ENCODE measurements at regions of chr4 and their contacts with region 1.

Region 1: DNA sequence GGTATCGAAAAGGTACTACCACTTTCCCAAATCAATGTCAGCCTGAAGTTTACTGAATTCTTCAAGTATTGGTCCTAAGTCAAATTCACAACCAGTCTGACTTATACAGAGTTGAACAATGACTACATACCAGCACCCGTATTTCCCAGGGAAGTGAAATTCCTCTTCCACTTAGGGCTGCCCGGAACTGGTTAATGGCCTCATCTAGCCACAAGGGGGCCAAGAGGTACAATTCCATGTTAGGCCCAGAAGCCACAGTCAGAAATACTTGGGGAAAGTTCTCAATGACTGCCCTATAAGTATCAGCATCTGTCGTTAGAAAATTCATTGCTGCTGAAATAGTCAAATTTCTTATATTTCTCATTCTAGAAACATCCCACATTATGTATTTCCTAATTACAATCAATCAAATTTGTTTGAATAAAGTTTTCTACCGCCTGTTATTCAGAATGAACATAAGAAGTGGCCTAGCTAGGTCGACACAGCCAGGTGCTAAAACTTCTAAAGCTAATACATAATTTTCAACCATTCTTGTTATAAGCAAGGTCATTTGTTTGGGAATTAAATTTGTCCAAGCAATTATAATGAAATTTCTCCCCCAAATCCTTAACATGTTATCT is 5.7 kb upstream of the PCDH7 start:
- DNase-seq: peak in 1 of 2 experiments; percentile 35
- H3K4me3 ChIP-seq: no peak overlapping the region
- H3K27ac ChIP-seq: no peak overlapping the region
- H3K4me1 ChIP-seq: no peaks in the 10 kb centered on the region
- H3K27me3 ChIP-seq: no peaks in the 10 kb centered on the region
- CTCF ChIP-seq: peak; percentile 79

Region 2: DNA sequence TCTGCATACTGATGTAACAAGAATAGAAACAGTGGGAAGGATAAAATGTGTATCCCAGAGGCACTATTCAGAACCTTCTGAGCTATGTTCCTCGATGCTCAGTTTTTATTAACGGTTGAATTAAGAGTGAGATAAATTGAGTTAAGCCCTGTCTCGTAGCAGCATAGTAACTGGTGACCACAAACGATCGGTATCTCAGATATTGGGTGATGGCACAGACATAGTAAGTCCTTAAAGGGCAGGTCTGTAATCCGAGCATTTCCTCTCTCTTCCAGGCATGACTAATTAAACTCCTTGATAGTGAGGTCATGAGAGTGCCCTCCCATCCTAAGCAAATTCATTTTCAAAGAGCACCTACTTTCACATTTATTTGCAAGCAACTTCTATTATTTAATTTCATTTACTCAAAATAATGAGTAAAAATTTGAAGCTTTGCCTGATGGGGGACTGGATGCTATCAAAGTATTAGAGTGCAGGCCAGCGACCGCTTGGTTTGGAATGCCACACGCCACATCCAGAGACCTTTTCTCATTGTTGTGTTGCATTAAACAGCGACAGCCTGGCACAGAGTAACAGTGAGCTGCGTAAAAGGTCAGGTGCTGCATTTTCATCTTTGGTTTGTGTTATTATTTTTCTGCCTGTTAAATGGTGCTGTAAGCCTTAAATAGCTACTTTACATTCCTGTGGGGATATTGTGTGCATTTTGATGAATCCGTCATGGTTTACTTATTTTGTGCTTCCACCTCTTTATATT is 107.5 kb after region 1 on chr4:
- CTCF ChIA-PET with region 1: no interaction called
- POLR2A ChIA-PET with region 1: interaction called, 4 read pairs
- intact Hi-C with region 1: loop called (anchors 5 kb)
- DNase-seq: peak; percentile 36 to 81
- H3K4me3 ChIP-seq: no peak overlapping the region
- H3K27ac ChIP-seq: no peak overlapping the region
- H3K4me1 ChIP-seq: peaks cover 10% of the 10 kb centered on the region
- H3K27me3 ChIP-seq: no peaks in the 10 kb centered on the region
- CTCF ChIP-seq: no peak

Region 3: GRCh38 chr4:30863021-30863420 is 148.5 kb after region 1 on chr4:
- CTCF ChIA-PET with region 1: no interaction called
- POLR2A ChIA-PET with region 1: interaction called, 11 read pairs
- intact Hi-C with region 1: loop called (anchors 2 kb)
- DNase-seq: no peak
- H3K4me3 ChIP-seq: no peak overlapping the region
- H3K27ac ChIP-seq: no peak overlapping the region
- H3K4me1 ChIP-seq: peaks cover 25% of the 10 kb centered on the region
- H3K27me3 ChIP-seq: no peaks in the 10 kb centered on the region
- CTCF ChIP-seq: no peak

Region 4: GRCh38 chr4:31045724-31046318 is 331.3 kb after region 1 on chr4:
- CTCF ChIA-PET with region 1: interaction called, 4 read pairs
- POLR2A ChIA-PET with region 1: no interaction called
- intact Hi-C with region 1: loop called (anchors 2 kb)
- DNase-seq: peak; percentile 31 to 57
- H3K4me3 ChIP-seq: no peak overlapping the region
- H3K27ac ChIP-seq: no peak overlapping the region
- H3K4me1 ChIP-seq: peaks cover 16% of the 10 kb centered on the region
- H3K27me3 ChIP-seq: no peaks in the 10 kb centered on the region
- CTCF ChIP-seq: peak; percentile 74

Region 5: DNA sequence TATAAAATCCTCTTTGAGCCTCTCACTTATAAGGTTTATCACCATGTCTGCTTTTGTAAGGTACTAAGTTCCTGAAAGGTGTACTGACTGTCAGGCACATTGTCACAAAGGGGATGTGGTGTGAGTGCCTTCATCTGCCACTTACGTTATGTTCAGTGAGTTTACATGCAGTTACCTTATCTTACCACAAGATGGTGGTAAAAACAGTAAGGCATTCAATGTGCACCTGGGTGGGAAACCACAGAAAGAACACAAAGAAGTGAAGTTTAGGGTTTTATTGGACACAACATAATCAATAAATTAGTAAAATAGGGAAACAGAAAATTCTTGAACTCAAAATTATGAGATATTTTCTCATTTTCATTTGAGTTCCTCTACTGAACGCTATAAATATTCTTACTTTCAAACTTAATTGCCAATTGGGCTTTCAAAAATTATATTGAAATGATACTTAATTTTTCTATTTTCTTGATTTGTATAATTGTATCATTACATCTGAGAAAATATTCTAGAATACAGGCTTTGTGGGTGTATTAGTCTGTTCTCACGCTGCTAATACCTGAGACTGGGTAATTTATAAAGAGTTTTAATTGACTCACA is 656.4 kb after region 1 on chr4:
- CTCF ChIA-PET with region 1: no interaction called
- POLR2A ChIA-PET with region 1: no interaction called
- intact Hi-C with region 1: loop called (anchors 5 kb)
- DNase-seq: peak in 1 of 2 experiments; percentile 1
- H3K4me3 ChIP-seq: no peak overlapping the region
- H3K27ac ChIP-seq: no peak overlapping the region
- H3K4me1 ChIP-seq: no peaks in the 10 kb centered on the region
- H3K27me3 ChIP-seq: no peaks in the 10 kb centered on the region
- CTCF ChIP-seq: peak; percentile 81

Region 6: DNA sequence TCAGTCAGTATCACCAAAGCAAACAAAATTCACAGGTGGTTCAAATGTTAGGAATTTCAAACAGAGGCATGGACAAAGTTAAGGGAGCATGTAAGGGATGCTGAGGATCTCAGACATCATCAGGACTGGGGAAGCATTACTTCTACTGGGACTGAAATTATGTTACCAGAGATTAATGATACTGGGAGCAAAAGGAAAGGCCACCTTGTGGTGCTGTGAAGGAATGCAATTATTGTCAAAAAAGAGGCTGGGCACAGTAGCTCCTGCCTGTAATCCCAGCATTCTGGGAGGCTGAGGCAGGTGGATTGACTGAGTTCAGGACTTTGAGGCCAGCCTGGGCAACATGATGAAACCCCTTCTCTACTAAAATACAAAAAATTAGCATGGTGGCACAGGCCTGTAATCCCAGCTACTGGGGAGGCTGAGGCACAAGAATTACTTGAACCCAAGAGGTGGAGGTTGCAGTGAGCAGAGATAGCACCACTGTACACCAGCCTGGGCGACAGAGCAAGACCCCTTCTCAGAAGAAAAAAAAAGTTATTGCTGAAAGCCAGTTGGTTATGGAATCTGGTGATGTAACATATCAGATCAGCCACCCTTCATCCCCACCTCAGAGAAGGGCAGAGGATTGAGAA is 959.9 kb after region 1 on chr4:
- CTCF ChIA-PET with region 1: no interaction called
- POLR2A ChIA-PET with region 1: no interaction called
- intact Hi-C with region 1: loop called (anchors 5 kb)
- DNase-seq: no peak
- H3K4me3 ChIP-seq: no peak overlapping the region
- H3K27ac ChIP-seq: no peak overlapping the region
- H3K4me1 ChIP-seq: no peaks in the 10 kb centered on the region
- H3K27me3 ChIP-seq: no peaks in the 10 kb centered on the region
- CTCF ChIP-seq: peak; percentile 66

Region 7: GRCh38 chr4:32268863-32269262 is 1554.3 kb after region 1 on chr4:
- CTCF ChIA-PET with region 1: no interaction called
- POLR2A ChIA-PET with region 1: no interaction called
- intact Hi-C with region 1: loop called (anchors 5 kb)
- DNase-seq: no peak
- H3K4me3 ChIP-seq: no peak overlapping the region
- H3K27ac ChIP-seq: no peak overlapping the region
- H3K4me1 ChIP-seq: no peaks in the 10 kb centered on the region
- H3K27me3 ChIP-seq: no peaks in the 10 kb centered on the region
- CTCF ChIP-seq: no peak